ENCODE measurements at regions of chr2 and their contacts with region 1.

Region 1: GRCh38 chr2:7427293-7428060 is 510.3 kb downstream of the RNF144A start:
- DNase-seq: peak in 6 of 14 experiments; percentile 5 to 81 (median 58)
- ATAC-seq: peak; percentile 60
- H3K4me3 ChIP-seq: no peak overlapping the region
- H3K4me3 Mint-ChIP-seq: no peak overlapping the region
- H3K27ac ChIP-seq: no peak overlapping the region
- H3K27ac Mint-ChIP-seq: peak overlapping the region; percentile 22
- H3K4me1 ChIP-seq: peaks cover 36% of the 10 kb centered on the region
- H3K4me1 Mint-ChIP-seq: peaks cover 45% of the 10 kb centered on the region
- H3K27me3 ChIP-seq: no peaks in the 10 kb centered on the region
- H3K27me3 Mint-ChIP-seq: no peaks in the 10 kb centered on the region
- CTCF ChIP-seq: peak; percentile 87

Region 2: DNA sequence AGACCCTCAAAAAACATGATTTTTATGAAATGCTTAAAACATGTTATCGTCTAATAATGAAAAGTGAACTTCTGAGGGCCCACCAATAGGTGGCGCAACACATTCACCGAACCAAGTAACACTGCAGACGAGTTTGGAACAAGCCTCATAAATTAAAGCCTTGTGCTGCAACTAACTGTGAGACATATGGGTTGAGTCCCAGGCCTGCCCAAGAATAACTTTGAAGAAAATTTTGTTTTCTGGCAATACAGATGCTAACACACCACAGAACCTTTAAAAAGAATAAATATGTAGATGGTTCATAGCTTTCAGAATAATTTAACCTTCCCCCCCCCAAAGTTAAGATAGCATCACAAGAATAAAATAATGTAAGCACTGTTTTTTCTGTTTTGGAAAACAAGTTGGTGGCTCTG is 224.4 kb before region 1 on chr2:
- CTCF ChIA-PET with region 1: no interaction called
- POLR2A ChIA-PET with region 1: no interaction called
- intact Hi-C with region 1: loop called in 1 of 2 experiments (anchors 5 kb)
- DNase-seq: peak; percentile 29 to 77 (median 42)
- ATAC-seq: no peak
- H3K4me3 ChIP-seq: no peak overlapping the region
- H3K4me3 Mint-ChIP-seq: no peak overlapping the region
- H3K27ac ChIP-seq: no peak overlapping the region
- H3K27ac Mint-ChIP-seq: no peak overlapping the region
- H3K4me1 ChIP-seq: no peaks in the 10 kb centered on the region
- H3K4me1 Mint-ChIP-seq: no peaks in the 10 kb centered on the region
- H3K27me3 ChIP-seq: no peaks in the 10 kb centered on the region
- H3K27me3 Mint-ChIP-seq: no peaks in the 10 kb centered on the region
- CTCF ChIP-seq: peak; percentile 94

Region 3: DNA sequence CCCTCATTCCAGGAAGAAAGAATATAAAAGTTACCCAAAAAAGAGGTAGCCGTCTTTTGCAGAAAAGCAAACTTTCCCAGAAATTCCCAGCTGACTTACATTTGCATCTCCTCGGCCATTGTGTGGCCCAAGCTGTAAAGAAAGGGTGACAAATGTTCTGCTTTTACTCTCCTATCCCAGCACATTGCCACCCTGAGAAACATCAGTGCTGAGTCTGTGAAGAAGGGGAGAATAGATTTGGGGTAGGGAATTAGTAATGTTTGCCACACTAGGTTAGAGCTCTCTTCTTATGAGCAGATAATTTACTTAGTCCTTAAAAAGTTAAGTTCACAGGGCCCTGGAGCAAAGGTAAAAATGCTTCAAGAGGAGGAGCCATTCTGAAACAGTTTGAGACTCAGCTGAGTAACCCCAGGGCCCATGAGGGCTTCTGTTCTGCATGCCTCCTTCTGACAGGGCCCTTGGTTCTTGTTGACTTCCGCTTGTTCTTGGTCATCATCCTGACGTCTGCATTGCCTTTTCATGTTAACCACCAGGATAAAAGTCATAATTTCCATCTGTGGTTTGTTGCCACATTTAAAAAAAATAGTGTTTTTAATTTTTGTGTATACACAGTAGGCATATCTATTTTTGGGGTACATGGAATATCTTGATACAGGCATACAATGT is 40.4 kb after region 1 on chr2:
- CTCF ChIA-PET with region 1: no interaction called
- POLR2A ChIA-PET with region 1: no interaction called
- intact Hi-C with region 1: loop called in 1 of 2 experiments (anchors 5 kb)
- DNase-seq: peak in 6 of 14 experiments; percentile 13 to 74 (median 56)
- ATAC-seq: peak; percentile 95
- H3K4me3 ChIP-seq: no peak overlapping the region
- H3K4me3 Mint-ChIP-seq: peak overlapping the region; percentile 5
- H3K27ac ChIP-seq: no peak overlapping the region
- H3K27ac Mint-ChIP-seq: peak overlapping the region; percentile 75
- H3K4me1 ChIP-seq: peaks cover 7% of the 10 kb centered on the region
- H3K4me1 Mint-ChIP-seq: peaks cover 30% of the 10 kb centered on the region
- H3K27me3 ChIP-seq: no peaks in the 10 kb centered on the region
- H3K27me3 Mint-ChIP-seq: no peaks in the 10 kb centered on the region
- CTCF ChIP-seq: no peak

Region 4: DNA sequence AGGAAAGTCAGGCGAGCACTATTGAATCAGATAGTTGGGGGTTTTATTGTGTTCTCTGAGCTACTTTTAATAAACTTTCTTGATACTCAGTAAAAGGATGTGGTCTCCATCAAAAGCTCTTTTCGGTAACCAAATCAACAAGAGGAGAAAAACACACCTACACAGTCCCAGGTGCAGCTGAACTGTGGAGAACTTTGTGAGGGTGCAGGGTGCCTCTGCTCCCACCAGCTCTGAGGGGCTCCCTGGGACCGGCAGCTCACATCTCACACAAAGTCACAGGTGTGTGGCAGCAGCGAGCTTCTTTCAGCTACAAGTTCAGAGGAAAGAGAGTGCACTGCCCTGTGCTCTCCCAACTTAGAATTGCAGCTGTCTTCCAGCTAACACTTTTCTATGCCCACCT is 140.2 kb after region 1 on chr2:
- CTCF ChIA-PET with region 1: no interaction called
- POLR2A ChIA-PET with region 1: interaction called, 23 read pairs
- intact Hi-C with region 1: loop called (anchors 5 to 10 kb)
- DNase-seq: peak; percentile 7 to 75 (median 54)
- ATAC-seq: peak; percentile 88
- H3K4me3 ChIP-seq: no peak overlapping the region
- H3K4me3 Mint-ChIP-seq: peak overlapping the region; percentile 43
- H3K27ac ChIP-seq: peak overlapping the region; percentile 52 to 62
- H3K27ac Mint-ChIP-seq: peak overlapping the region; percentile 91
- H3K4me1 ChIP-seq: peaks cover 31% of the 10 kb centered on the region
- H3K4me1 Mint-ChIP-seq: peaks cover 67% of the 10 kb centered on the region
- H3K27me3 ChIP-seq: no peaks in the 10 kb centered on the region
- H3K27me3 Mint-ChIP-seq: no peaks in the 10 kb centered on the region
- CTCF ChIP-seq: peak; percentile 12

Region 5: GRCh38 chr2:7744827-7745226 is 317.4 kb after region 1 on chr2:
- CTCF ChIA-PET with region 1: interaction called, 9 read pairs
- POLR2A ChIA-PET with region 1: no interaction called
- intact Hi-C with region 1: loop called (anchors 2 to 5 kb)
- DNase-seq: peak in 6 of 14 experiments; percentile 11 to 85 (median 48)
- ATAC-seq: peak; percentile 71
- H3K4me3 ChIP-seq: no peak overlapping the region
- H3K4me3 Mint-ChIP-seq: no peak overlapping the region
- H3K27ac ChIP-seq: no peak overlapping the region
- H3K27ac Mint-ChIP-seq: peak overlapping the region; percentile 12
- H3K4me1 ChIP-seq: peaks cover 11% of the 10 kb centered on the region
- H3K4me1 Mint-ChIP-seq: peaks cover 12% of the 10 kb centered on the region
- H3K27me3 ChIP-seq: no peaks in the 10 kb centered on the region
- H3K27me3 Mint-ChIP-seq: no peaks in the 10 kb centered on the region
- CTCF ChIP-seq: no peak

Region 6: GRCh38 chr2:9003616-9004337 is 1576.3 kb after region 1 on chr2 and contains the start of gene MBOAT2:
- CTCF ChIA-PET with region 1: no interaction called
- POLR2A ChIA-PET with region 1: no interaction called
- intact Hi-C with region 1: loop called in 1 of 2 experiments (anchors 10 kb)
- DNase-seq: peak; percentile 56 to 91 (median 72)
- ATAC-seq: peak; percentile 85
- H3K4me3 ChIP-seq: peak within 1 kb of the TSS; percentile 74
- H3K4me3 Mint-ChIP-seq: peak within 1 kb of the TSS; percentile 91
- H3K27ac ChIP-seq: peak within 1 kb of the TSS in 1 of 2 donors; percentile 35
- H3K27ac Mint-ChIP-seq: peak within 1 kb of the TSS; percentile 82
- H3K4me1 ChIP-seq: peaks cover 15% of the 10 kb centered on the region
- H3K4me1 Mint-ChIP-seq: peaks cover 26% of the 10 kb centered on the region
- H3K27me3 ChIP-seq: no peaks in the 10 kb centered on the region
- H3K27me3 Mint-ChIP-seq: no peaks in the 10 kb centered on the region
- CTCF ChIP-seq: no peak
- total RNA-seq, gene MBOAT2: 1.9 to 2.0 TPM